Activated CD4-positive, alpha-beta memory T cell treated with anti-CD3 and anti-CD28 coated beads, Interleukin-2, amount 10 ng/mL, durations not matched to agents 7 days and 5 days (primary cell): ENCODE measurements at regions of chr13 and their contacts with region 1.

Region 1: GRCh38 chr13:99269627-99270241 is 11.6 kb upstream of the GPR18 start:
- DNase-seq: peak; percentile 34
- H3K4me3 Mint-ChIP-seq: no peak overlapping the region
- H3K27ac Mint-ChIP-seq: no peak overlapping the region
- H3K4me1 Mint-ChIP-seq: peaks cover 58% of the 10 kb centered on the region
- H3K27me3 Mint-ChIP-seq: no peaks in the 10 kb centered on the region

Region 2: GRCh38 chr13:99200432-99201167 is 69.1 kb before region 1 on chr13 and contains the start of gene UBAC2:
- CTCF ChIA-PET with region 1: interaction called, 179 read pairs
- POLR2A ChIA-PET with region 1: interaction called, 51 read pairs
- DNase-seq: peak; percentile 97
- H3K4me3 Mint-ChIP-seq: peak within 1 kb of the TSS; percentile 93
- H3K27ac Mint-ChIP-seq: peak within 1 kb of the TSS; percentile 80
- H3K4me1 Mint-ChIP-seq: peaks cover 50% of the 10 kb centered on the region
- H3K27me3 Mint-ChIP-seq: peaks cover 6% of the 10 kb centered on the region
- total RNA-seq, gene UBAC2: 53.8 to 55.2 TPM

Region 3: GRCh38 chr13:99296398-99296797 is 26.7 kb after region 1 on chr13:
- CTCF ChIA-PET with region 1: interaction called, 39 read pairs
- POLR2A ChIA-PET with region 1: interaction called, 393 read pairs
- DNase-seq: no peak
- H3K4me3 Mint-ChIP-seq: peak overlapping the region; percentile 71
- H3K27ac Mint-ChIP-seq: peak overlapping the region; percentile 94
- H3K4me1 Mint-ChIP-seq: peaks cover 78% of the 10 kb centered on the region
- H3K27me3 Mint-ChIP-seq: no peaks in the 10 kb centered on the region

Region 4: DNA sequence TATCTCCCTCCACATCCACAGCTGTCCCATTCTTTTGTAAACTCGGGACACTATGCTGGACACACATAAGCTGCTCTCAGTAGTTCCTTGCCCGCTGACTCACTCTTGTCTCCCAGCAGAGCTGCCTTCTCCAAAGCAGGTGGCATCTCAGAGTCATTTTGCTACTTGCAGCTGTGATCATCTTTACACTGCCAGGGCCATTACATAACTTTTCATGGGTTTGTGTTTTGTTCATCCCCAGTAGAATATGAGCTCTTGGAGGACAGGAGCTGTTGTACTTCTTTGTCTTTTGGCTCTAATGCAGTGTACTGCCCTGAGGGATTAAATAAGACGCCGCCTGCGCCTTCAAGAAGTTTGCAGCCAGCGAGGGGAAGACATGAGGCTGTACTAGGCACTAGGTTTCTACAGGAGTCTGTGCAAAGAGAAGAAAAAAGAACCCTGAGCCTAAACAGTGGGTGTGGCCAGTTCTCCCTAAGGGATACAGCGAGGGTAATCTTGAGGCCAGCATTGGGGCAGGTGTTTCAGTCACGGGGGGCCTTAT is 78.2 kb after region 1 on chr13:
- CTCF ChIA-PET with region 1: interaction called, 24 read pairs
- POLR2A ChIA-PET with region 1: interaction called, 9 read pairs
- DNase-seq: no peak
- H3K4me3 Mint-ChIP-seq: no peak overlapping the region
- H3K27ac Mint-ChIP-seq: no peak overlapping the region
- H3K4me1 Mint-ChIP-seq: peaks cover 47% of the 10 kb centered on the region
- H3K27me3 Mint-ChIP-seq: no peaks in the 10 kb centered on the region

Region 5: DNA sequence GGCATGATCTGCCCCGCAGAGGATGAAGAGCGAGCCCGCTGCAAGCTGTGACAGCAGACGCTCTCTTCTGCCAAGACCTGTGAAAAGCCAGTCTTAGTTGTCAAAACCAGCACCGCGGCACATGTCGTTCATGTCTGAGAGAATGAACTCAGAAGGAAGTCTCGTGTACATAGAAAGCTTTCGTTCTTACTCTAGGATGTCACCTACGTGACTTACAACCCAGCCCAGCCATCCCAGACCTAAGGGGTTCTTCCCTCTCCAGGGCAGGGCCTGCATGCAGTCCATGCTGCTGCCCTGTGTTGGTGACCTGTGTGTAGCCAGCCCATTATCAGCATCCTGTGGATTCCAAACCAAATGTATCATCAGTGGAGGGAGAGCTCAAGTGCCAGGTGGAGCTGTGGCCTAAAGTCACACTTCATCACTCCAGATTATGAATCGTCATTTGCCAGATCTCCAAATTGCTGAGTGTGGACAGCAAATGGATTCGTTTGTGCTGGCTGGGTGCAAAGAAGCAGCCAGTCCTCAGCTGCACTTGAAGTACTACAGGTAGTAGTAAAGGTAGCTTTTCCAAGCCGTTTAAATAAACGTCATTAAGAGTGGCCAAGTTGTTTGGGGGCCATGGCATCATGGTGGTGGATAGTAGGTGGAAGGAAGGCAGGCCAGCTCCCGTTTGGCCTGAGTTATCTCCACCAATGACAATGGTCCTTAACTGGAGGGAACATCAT is 111.3 kb after region 1 on chr13:
- CTCF ChIA-PET with region 1: interaction called, 121 read pairs
- POLR2A ChIA-PET with region 1: interaction called, 23 read pairs
- DNase-seq: peak; percentile 77
- H3K4me3 Mint-ChIP-seq: no peak overlapping the region
- H3K27ac Mint-ChIP-seq: peak overlapping the region; percentile 84
- H3K4me1 Mint-ChIP-seq: peaks cover 86% of the 10 kb centered on the region
- H3K27me3 Mint-ChIP-seq: no peaks in the 10 kb centered on the region

Region 6: DNA sequence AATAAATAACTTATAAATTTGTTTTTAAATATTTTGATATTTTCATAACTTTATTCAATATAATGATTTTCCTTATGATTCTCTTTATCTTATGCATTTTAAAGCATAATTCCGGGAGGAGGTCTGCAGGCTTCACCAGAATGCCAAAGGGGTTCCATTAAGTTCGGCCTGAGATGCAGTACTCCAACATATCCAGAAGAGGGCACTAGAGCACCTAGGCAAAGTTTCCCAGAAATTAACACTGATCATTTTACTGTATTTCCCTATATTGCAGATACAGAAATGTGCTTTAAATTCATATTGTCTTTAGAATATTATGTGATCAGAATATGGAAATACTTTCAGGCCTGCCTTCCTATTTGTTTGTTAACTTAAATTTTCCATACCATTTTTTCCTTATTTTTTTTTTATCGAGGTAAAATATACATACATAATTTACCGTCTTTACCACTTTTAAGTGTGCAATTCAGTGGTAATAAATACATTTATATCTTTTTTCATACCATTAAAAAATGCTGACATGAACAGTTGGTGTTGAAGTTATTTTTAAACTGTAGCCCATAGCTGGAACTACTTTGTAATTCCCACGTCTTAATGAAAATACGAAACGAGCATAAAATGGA is 172.7 kb after region 1 on chr13:
- CTCF ChIA-PET with region 1: interaction called, 317 read pairs
- POLR2A ChIA-PET with region 1: interaction called, 57 read pairs
- DNase-seq: peak; percentile 54
- H3K4me3 Mint-ChIP-seq: no peak overlapping the region
- H3K27ac Mint-ChIP-seq: no peak overlapping the region
- H3K4me1 Mint-ChIP-seq: peaks cover 17% of the 10 kb centered on the region
- H3K27me3 Mint-ChIP-seq: peaks cover 21% of the 10 kb centered on the region

Region 7: DNA sequence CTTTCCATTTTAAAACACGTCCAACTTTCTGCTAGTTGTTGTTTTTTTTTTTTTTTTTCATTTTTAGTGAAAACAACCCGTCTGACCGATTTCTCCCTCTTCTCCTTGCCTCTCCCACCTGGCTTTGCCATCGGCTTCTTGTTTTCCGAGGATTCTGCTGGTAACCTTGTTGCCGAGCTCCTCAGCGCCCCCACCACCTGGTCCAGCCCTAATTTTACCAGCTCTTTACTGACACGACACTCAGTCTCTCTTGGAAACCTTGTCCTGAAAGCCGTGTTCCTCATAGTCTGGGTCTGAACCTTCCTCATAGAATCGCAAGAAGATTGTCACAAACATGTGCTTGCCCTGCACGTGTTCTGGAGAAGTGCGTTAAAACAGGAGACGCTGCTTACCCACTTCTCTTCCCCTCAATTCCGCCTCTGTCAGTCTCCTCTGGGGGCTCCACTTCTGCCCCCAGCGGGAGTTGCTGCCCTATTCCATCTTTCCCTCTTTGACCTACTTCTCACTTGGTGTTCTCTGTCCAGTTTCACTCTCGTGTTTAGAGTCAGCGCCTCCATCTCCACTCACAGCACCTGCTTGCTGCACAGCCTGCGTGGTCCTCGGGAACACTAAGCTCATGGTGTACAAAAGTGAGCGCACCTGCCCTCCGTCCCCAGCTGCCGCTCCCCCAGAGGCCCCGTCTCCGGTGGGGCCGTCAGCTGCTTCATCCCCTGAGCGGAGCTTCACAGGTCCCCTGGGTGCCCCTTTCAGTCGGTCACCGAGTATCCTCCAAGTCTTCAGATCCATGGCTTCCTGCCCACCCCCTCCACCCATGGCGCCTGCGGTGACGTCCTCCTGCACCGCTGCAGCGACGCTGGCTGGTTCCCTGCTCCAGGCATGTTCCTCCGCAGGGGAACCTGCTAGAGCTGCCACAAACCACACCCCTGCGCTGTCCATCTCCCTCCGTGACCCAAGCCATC is 296.7 kb after region 1 on chr13:
- CTCF ChIA-PET with region 1: no interaction called
- POLR2A ChIA-PET with region 1: no interaction called
- DNase-seq: no peak
- H3K4me3 Mint-ChIP-seq: no peak overlapping the region
- H3K27ac Mint-ChIP-seq: no peak overlapping the region
- H3K4me1 Mint-ChIP-seq: peaks cover 9% of the 10 kb centered on the region
- H3K27me3 Mint-ChIP-seq: no peaks in the 10 kb centered on the region